Endothelial cell of umbilical vein (primary cell): ENCODE measurements at regions of chr5 and their contacts with region 1.

Region 1: DNA sequence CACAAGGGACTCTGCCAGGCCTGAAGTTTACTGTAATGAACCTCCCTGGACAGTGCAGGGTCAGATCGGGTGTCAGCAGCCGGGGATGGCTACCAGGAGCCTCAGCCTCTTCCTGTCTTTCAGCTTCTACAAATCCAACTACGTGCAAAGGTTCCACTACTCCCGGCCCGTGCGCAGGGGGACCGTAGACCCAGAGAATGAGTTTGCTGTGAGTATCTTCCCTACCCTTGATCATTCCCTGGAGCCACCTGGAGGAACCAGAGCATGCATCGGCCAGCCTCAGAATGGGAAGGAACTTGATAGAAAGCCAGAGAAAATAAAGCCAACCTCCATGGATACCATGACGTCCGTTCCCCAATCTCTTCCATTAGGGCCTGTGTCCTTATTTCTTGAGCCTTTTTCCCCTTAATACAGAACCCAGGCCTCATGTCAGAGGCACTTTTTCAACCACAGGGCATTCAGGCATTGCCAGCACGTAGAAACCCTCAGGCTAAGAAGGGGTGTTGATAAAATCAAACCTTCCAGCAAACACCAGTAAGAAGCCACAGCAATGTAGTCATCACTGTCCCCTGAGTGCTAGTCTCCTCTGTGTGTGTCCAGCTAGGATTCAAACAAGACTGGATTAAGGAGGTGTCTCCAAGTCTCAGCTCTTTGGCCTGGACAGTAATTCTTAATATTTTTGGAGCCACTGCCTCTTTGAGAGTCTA is 49.0 kb upstream of the FOXI1 start:
- DNase-seq: peak; percentile 5
- H3K4me3 ChIP-seq: no peak overlapping the region
- H3K27ac ChIP-seq: no peak overlapping the region
- H3K4me1 ChIP-seq: peaks cover 14% of the 10 kb centered on the region
- H3K27me3 ChIP-seq: no peaks in the 10 kb centered on the region
- CTCF ChIP-seq: no peak
- POLR2A ChIP-seq: no peak

Region 2: DNA sequence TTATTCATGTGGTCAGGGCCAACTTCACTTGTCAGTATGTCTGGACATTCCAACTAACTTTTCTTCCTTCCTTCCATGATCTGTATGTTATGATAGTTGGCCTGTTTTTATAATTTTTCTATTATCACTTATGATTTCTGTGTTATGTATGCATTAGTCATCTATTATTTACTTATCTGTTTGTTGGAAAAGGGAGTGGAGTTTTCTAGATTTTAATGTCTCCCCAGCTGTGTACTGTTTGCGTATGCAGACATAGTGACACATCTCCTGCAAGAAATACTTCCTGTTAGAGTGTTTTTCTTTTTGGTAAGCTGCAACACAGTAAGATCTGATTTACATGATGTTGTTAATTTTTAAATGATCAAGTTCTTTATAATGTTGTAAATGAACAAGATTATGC is 67.8 kb before region 1 on chr5:
- CTCF ChIA-PET with region 1: no interaction called
- POLR2A ChIA-PET with region 1: no interaction called
- dilution Hi-C with region 1: no loop called
- intact Hi-C with region 1: loop called (anchors 5 kb)
- DNase-seq: peak; percentile 75
- H3K4me3 ChIP-seq: no peak overlapping the region
- H3K27ac ChIP-seq: peak overlapping the region; percentile 95
- H3K4me1 ChIP-seq: peaks cover 26% of the 10 kb centered on the region
- H3K27me3 ChIP-seq: no peaks in the 10 kb centered on the region
- CTCF ChIP-seq: no peak
- POLR2A ChIP-seq: no peak

Region 3: DNA sequence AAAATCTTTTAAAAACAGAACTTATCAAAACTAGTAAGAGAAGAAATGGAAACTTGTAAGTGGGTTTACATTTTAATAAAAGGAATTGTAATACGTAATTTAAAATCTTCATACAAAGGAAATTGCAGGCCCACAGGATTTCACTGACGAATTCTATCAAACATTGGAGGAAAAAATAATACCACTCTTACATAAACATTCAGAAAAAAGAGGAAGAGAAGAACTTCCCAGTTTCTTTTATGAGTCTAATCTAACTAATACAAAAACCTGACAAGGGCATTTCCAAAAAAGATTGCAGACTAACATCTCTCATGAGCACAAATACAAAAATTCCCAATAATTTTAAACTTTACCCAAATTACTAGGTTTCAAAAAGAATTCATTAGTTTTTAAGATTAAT is 954.1 kb after region 1 on chr5:
- CTCF ChIA-PET with region 1: no interaction called
- POLR2A ChIA-PET with region 1: no interaction called
- dilution Hi-C with region 1: no loop called
- intact Hi-C with region 1: no loop called
- DNase-seq: no peak
- H3K4me3 ChIP-seq: no peak overlapping the region
- H3K27ac ChIP-seq: no peak overlapping the region
- H3K4me1 ChIP-seq: no peaks in the 10 kb centered on the region
- H3K27me3 ChIP-seq: no peaks in the 10 kb centered on the region
- CTCF ChIP-seq: no peak
- POLR2A ChIP-seq: no peak